ENCODE measurements at regions of chr1 and their contacts with region 1.

Region 1: DNA sequence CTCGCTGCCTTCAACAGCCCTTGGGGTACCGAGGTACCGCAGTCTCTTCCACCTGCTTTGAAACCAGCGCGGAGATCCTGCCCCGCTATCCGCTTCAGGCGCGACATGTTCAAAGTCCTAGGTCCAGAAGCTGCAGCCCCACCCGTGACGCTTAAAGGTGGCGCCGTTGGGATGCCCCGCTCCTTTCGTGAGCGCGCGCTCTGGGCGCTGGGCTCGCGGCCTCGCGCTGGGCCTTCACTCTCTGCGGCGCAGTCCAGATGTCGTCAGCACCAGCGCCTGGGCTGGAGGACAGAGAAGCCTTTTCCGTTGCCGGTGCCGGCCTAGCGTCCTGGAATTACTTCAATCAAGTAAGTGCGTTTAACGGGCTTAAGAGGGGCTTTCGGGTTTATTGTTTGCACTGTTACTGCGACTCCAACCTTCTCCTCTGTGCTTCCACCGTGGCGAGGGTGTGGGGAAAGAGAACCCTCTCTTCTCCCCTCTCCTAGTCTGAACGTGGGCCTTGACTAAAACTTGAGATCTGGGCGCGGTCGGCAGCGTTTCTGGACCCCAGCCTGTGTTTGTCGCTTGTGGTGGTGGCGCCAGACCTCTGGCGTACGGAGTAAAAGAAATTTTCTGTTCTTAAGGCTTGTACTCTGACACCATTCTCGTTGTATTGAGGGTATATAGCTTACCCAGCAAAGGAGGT is at the start of gene LRRC40:
- DNase-seq: peak; percentile 94 to 99 (median 97)

Region 2: DNA sequence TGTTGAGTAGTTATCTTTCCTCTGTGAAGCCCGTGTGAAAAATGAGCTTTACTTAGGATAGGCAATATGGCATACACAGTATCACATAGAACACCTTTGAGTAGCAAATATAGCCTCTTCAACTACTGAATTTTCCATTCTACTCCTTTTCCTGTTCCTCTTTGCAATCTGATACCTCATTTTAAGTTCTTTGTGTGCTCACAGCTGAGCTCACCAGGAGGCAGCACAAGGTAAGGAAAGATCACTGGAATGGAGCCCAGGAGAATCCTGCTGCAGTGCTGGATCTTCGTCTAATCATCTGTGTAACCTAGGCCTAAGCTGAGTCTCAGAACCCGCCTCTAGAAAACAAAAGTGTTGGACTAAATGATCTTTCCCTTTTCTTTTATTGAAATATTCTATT is 171.2 kb before region 1 on chr1:
- intact Hi-C with region 1: no loop called
- DNase-seq: no peak

Region 3: GRCh38 chr1:70221241-70222121 is 15.9 kb after region 1 on chr1 and contains the start of gene SRSF11:
- intact Hi-C with region 1: loop called (anchors 2 kb)
- DNase-seq: peak; percentile 93 to 99 (median 96)

Region 4: DNA sequence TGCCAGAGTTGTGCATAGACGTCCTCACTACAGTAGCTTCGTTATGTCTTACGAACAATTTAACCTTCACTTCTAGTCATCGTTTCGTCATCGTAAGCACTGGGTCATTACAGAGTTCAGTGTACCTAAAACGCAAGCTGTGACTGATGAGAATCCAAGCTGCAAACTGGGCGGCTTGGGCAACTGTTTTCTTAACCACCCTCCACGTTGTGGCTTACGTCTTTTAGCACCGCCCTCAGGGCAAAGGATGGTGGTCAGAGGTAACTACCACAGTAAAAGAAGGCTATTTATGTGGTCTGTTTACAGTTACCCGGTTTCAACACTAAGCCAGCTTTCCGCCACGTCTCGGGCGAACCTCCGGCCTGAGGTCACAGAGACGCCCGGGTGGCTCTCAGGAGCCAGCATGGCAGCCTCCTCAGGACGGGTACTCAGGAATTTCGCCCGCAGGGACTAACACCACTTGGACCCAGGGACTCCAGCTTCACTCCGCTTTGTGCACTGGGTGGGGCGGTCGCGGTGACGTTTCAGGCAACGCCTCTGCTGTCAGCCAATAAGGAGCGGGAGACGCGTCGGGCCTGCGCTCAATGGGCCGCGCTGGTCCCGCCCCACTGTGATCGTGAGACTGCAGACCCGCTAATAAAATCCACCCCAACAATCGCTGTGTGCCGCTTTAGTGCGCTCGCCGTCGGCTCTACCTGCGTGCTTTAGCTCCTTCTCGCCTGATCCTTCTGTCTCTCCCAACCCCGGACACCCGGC is 205.2 kb after region 1 on chr1 and contains the start of gene CTH:
- intact Hi-C with region 1: loop called (anchors 2 kb)
- DNase-seq: peak; percentile 95 to 100 (median 98)

Region 5: GRCh38 chr1:71080739-71081696 is 875.4 kb after region 1 on chr1 and contains the start of gene ZRANB2:
- intact Hi-C with region 1: loop called (anchors 5 kb)
- DNase-seq: peak; percentile 71 to 97 (median 85)

Measured in posterior cingulate gyrus (tissue), 11 donors.